Aorta (tissue), 5 donors: ENCODE measurements at regions of chr4 and their contacts with region 1.

Region 1: GRCh38 chr4:185874516-185875230 is 62.7 kb upstream of the SORBS2 start:
- DNase-seq: no peak
- ATAC-seq: no peak
- H3K4me3 ChIP-seq: no peak overlapping the region
- H3K27ac ChIP-seq: no peak overlapping the region
- H3K4me1 ChIP-seq: no peaks in the 10 kb centered on the region
- H3K27me3 ChIP-seq: no peaks in the 10 kb centered on the region

Region 2: GRCh38 chr4:185839194-185839712 is 35.4 kb before region 1 on chr4:
- intact Hi-C with region 1: loop called in 1 of 2 experiments (anchors 5 kb)
- DNase-seq: peak; percentile 66 to 79
- ATAC-seq: peak; percentile 90
- H3K4me3 ChIP-seq: no peak overlapping the region
- H3K27ac ChIP-seq: peak overlapping the region in 1 of 2 donors; percentile 85
- H3K4me1 ChIP-seq: peaks cover 0 to 2% of the 10 kb centered on the region in 2 donors
- H3K27me3 ChIP-seq: no peaks in the 10 kb centered on the region

Region 3: GRCh38 chr4:186082221-186082620 is 207.5 kb after region 1 on chr4:
- intact Hi-C with region 1: no loop called
- DNase-seq: no peak
- ATAC-seq: no peak
- H3K4me3 ChIP-seq: no peak overlapping the region
- H3K27ac ChIP-seq: no peak overlapping the region
- H3K4me1 ChIP-seq: no peaks in the 10 kb centered on the region
- H3K27me3 ChIP-seq: no peaks in the 10 kb centered on the region